GM12878 (cell line): ENCODE measurements at regions of chr7 and their contacts with region 1.

Region 1: GRCh38 chr7:29189743-29190201 is 4.8 kb upstream of the CHN2 start:
- DNase-seq: no peak
- ATAC-seq: peak; percentile 95
- H3K4me3 ChIP-seq: no peak overlapping the region
- H3K27ac ChIP-seq: no peak overlapping the region
- H3K4me1 ChIP-seq: no peaks in the 10 kb centered on the region
- H3K27me3 ChIP-seq: peaks cover 0 to 10% of the 10 kb centered on the region in 2 experiments; a peak in 3 of 4 replicates
- CTCF ChIP-seq: peak; percentile 77 to 86 (median 81)
- EP300 ChIP-seq: no peak
- POLR2A ChIP-seq: no peak
- RAD21 ChIP-seq: peak; percentile 66

Region 2: DNA sequence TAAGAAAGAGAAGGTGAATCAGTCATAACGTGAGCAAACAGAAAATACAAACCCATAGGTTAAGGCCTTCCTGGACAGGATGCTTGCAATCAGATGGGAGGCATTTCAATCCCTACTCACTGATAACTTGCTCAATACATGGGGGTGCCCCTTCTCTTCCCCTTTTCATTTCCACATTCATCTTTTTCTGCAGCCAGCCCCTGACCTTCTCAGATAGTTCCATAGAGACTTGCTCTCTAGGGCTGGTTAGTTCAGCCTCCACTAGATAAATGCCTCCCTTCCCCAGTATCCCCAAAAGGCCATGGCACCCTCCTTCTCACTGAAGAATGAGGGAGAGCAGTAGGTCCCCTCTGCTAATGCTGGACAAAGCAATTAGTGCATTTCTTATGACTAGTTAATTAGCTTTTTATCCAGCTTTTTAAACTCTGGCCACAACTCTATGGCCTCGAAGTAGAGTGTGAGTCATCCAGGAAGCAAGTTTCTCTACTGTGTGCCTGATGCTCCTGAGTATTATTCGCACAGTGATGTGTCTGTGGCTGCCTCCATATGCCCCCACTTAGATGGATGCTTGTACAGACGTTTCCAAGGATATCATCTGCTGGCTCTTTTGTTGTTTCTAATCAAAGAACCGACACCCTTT is 17.5 kb after region 1 on chr7:
- CTCF ChIA-PET with region 1: interaction called, 13 read pairs
- POLR2A ChIA-PET with region 1: no interaction called
- RAD21 ChIA-PET with region 1: no interaction called
- SMC1A ChIA-PET with region 1: no interaction called
- in situ Hi-C with region 1: no loop called
- intact Hi-C with region 1: no loop called
- DNase-seq: no peak
- ATAC-seq: peak; percentile 41; the same call in 2 of the 3 replicates
- H3K4me3 ChIP-seq: no peak overlapping the region
- H3K27ac ChIP-seq: no peak overlapping the region
- H3K4me1 ChIP-seq: no peaks in the 10 kb centered on the region
- H3K27me3 ChIP-seq: no peaks in the 10 kb centered on the region; a peak in 1 of 4 replicates
- CTCF ChIP-seq: no peak
- EP300 ChIP-seq: no peak
- POLR2A ChIP-seq: no peak
- RAD21 ChIP-seq: no peak

Region 3: GRCh38 chr7:29345600-29345999 is 155.8 kb after region 1 on chr7:
- CTCF ChIA-PET with region 1: interaction called, 19 read pairs
- POLR2A ChIA-PET with region 1: no interaction called
- RAD21 ChIA-PET with region 1: interaction called, 3 read pairs
- SMC1A ChIA-PET with region 1: interaction called, 5 read pairs
- in situ Hi-C with region 1: no loop called
- intact Hi-C with region 1: loop called (anchors 2 kb)
- DNase-seq: no peak
- ATAC-seq: peak; percentile 71
- H3K4me3 ChIP-seq: no peak overlapping the region
- H3K27ac ChIP-seq: no peak overlapping the region
- H3K4me1 ChIP-seq: no peaks in the 10 kb centered on the region
- H3K27me3 ChIP-seq: no peaks in the 10 kb centered on the region
- CTCF ChIP-seq: peak in 2 of 3 experiments; percentile 33 to 44; a peak in 3 of 6 replicates
- EP300 ChIP-seq: no peak
- POLR2A ChIP-seq: no peak
- RAD21 ChIP-seq: no peak

Region 4: DNA sequence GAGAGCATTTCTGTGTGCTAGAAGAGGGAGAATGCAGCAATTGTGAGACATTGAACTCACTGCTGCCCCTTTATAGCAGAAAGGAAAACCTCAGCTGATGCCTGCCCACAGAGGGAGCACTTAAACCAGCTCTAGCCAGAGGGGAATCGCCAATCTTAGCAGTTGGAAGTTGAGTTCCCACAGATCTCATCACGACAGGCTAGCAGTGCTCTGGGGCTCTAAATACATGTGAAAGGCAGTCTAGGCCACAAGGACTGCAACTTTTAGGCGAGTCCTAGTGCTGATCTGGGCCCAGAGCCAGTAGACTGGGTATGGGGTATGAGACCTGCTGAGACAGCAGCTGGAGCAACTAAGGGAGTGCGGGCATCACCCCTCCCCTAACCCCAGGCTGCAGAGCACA is 348.6 kb after region 1 on chr7:
- CTCF ChIA-PET with region 1: no interaction called
- POLR2A ChIA-PET with region 1: no interaction called
- RAD21 ChIA-PET with region 1: no interaction called
- SMC1A ChIA-PET with region 1: no interaction called
- in situ Hi-C with region 1: no loop called
- intact Hi-C with region 1: no loop called
- DNase-seq: no peak
- ATAC-seq: no peak
- H3K4me3 ChIP-seq: no peak overlapping the region
- H3K27ac ChIP-seq: no peak overlapping the region
- H3K4me1 ChIP-seq: no peaks in the 10 kb centered on the region
- H3K27me3 ChIP-seq: no peaks in the 10 kb centered on the region
- CTCF ChIP-seq: no peak
- EP300 ChIP-seq: no peak
- POLR2A ChIP-seq: no peak
- RAD21 ChIP-seq: no peak